CD4-positive, alpha-beta memory T cell (primary cell): ENCODE measurements at regions of chr9 and their contacts with region 1.

Region 1: GRCh38 chr9:15485836-15486666 is 24.7 kb downstream of the PSIP1 start:
- DNase-seq: peak in 4 of 5 donors; percentile 14 to 27 (median 20)
- H3K4me3 ChIP-seq: no peak overlapping the region
- H3K4me3 Mint-ChIP-seq: no peak overlapping the region
- H3K27ac ChIP-seq: no peak overlapping the region
- H3K27ac Mint-ChIP-seq: peak overlapping the region in 5 of 7 donors; percentile 16 to 57 (median 53)
- H3K4me1 ChIP-seq: peaks cover 17% of the 10 kb centered on the region
- H3K4me1 Mint-ChIP-seq: peaks cover 28 to 48% (median 34%) of the 10 kb centered on the region in 4 donors
- H3K27me3 ChIP-seq: no peaks in the 10 kb centered on the region
- H3K27me3 Mint-ChIP-seq: no peaks in the 10 kb centered on the region

Region 2: DNA sequence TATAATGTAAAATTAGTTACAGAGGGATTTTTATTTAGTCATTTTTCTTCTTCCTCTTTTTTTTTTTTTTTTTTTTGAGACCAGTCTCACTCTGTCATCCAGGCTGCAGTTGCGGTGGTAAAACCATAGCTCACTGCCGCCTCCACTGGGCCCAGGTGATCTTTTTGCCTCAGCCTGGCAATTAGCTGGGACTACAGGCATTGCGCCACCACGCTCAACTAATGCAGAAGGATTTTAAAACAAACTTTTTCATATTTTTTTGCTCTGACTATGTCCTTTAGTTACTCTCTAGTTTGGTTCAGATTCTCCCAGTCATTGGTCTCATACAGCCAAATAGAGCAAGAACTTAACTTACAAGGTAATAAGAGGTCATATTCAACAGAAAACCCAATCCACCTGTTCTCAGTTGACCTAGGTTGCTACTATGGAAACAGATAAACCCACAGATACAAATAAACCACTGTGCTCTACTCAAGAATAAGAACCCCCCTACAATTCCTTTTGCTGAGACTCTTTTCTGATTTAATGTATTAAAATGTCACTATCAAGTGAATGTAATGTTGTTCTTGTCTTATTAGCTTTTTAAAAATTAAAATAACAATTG is 128.9 kb before region 1 on chr9:
- CTCF ChIA-PET with region 1: no interaction called
- POLR2A ChIA-PET with region 1: no interaction called
- intact Hi-C with region 1: loop called (anchors 1 kb)
- DNase-seq: peak in 4 of 5 donors; percentile 4 to 61 (median 28)
- H3K4me3 ChIP-seq: no peak overlapping the region
- H3K4me3 Mint-ChIP-seq: peak overlapping the region in 2 of 8 donors; percentile 45 to 61
- H3K27ac ChIP-seq: no peak overlapping the region
- H3K27ac Mint-ChIP-seq: peak overlapping the region in 4 of 7 donors; percentile 31 to 83 (median 62)
- H3K4me1 ChIP-seq: peaks cover 11% of the 10 kb centered on the region
- H3K4me1 Mint-ChIP-seq: peaks cover 8 to 28% (median 13%) of the 10 kb centered on the region in 4 donors
- H3K27me3 ChIP-seq: no peaks in the 10 kb centered on the region
- H3K27me3 Mint-ChIP-seq: no peaks in the 10 kb centered on the region

Region 3: DNA sequence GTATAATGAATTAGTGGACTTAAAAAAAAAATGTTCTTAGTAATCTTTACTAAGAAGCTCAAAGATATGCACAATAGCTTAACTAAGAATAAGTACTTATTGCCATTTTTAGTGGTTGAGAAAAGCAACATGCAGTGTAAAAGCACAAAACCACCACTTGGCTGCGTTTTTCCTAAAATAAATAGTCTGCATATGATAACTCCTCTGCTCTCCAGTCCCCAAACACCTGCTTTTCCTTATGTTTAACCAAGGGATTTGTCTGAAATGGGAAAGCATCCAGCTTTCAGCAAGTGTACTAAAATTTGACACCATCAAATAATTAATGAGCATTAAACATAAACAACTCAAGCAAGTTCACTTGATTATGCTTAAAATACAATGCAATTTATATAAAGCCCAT is 16.6 kb before region 1 on chr9:
- CTCF ChIA-PET with region 1: interaction called, 3 read pairs
- POLR2A ChIA-PET with region 1: no interaction called
- intact Hi-C with region 1: loop called (anchors 2 kb)
- DNase-seq: no peak
- H3K4me3 ChIP-seq: no peak overlapping the region
- H3K4me3 Mint-ChIP-seq: no peak overlapping the region
- H3K27ac ChIP-seq: no peak overlapping the region
- H3K27ac Mint-ChIP-seq: peak overlapping the region in 1 of 7 donors; percentile 3
- H3K4me1 ChIP-seq: no peaks in the 10 kb centered on the region
- H3K4me1 Mint-ChIP-seq: peaks cover 5 to 20% (median 8%) of the 10 kb centered on the region in 4 donors
- H3K27me3 ChIP-seq: no peaks in the 10 kb centered on the region
- H3K27me3 Mint-ChIP-seq: no peaks in the 10 kb centered on the region

Region 4: DNA sequence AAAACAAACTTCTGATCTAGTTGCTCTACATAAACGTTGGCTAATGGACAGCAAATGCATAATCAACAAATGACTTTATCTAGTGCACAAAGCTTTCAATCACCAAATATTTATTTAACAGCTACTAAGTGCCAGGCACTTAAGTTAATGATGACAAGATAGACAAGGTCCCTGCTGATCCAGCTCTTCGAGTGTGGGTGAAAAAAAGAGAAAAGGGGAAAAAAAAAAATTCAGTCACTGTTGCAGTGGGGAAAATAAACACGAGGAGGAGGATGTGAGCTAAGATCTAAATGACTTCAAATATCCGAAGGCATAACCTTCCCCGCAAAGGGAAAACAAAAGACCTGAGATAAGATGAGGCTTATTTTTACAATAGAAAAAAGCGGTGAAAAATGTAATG is 15.1 kb after region 1 on chr9:
- CTCF ChIA-PET with region 1: interaction called, 3 read pairs
- POLR2A ChIA-PET with region 1: interaction called, 3 read pairs
- intact Hi-C with region 1: loop called (anchors 2 kb)
- DNase-seq: no peak
- H3K4me3 ChIP-seq: no peak overlapping the region
- H3K4me3 Mint-ChIP-seq: peak overlapping the region in 6 of 8 donors; percentile 4 to 62 (median 36)
- H3K27ac ChIP-seq: no peak overlapping the region
- H3K27ac Mint-ChIP-seq: peak overlapping the region in 6 of 7 donors; percentile 2 to 80 (median 32)
- H3K4me1 ChIP-seq: peaks cover 83% of the 10 kb centered on the region
- H3K4me1 Mint-ChIP-seq: peaks cover 45 to 73% (median 62%) of the 10 kb centered on the region in 4 donors
- H3K27me3 ChIP-seq: no peaks in the 10 kb centered on the region
- H3K27me3 Mint-ChIP-seq: no peaks in the 10 kb centered on the region

Region 5: GRCh38 chr9:15529566-15530324 is 43.7 kb after region 1 on chr9:
- CTCF ChIA-PET with region 1: no interaction called
- POLR2A ChIA-PET with region 1: no interaction called
- intact Hi-C with region 1: loop called (anchors 1 kb)
- DNase-seq: no peak
- H3K4me3 ChIP-seq: no peak overlapping the region
- H3K4me3 Mint-ChIP-seq: no peak overlapping the region
- H3K27ac ChIP-seq: no peak overlapping the region
- H3K27ac Mint-ChIP-seq: no peak overlapping the region
- H3K4me1 ChIP-seq: no peaks in the 10 kb centered on the region
- H3K4me1 Mint-ChIP-seq: peaks cover 0 to 6% (median 4%) of the 10 kb centered on the region in 4 donors
- H3K27me3 ChIP-seq: no peaks in the 10 kb centered on the region
- H3K27me3 Mint-ChIP-seq: no peaks in the 10 kb centered on the region